Adrenal gland (tissue), 19 donors: ENCODE measurements at regions of chr2 and their contacts with region 1.

Region 1: GRCh38 chr2:158753641-158754611 is 41.2 kb upstream of the DAPL1 start:
- DNase-seq: peak; percentile 48 to 71 (median 58)
- H3K4me3 ChIP-seq: peak overlapping the region in 1 of 4 donors; percentile 40
- H3K27ac ChIP-seq: peak overlapping the region in 1 of 5 donors; percentile 2
- H3K4me1 ChIP-seq: peaks cover 0 to 6% of the 10 kb centered on the region in 2 donors
- H3K27me3 ChIP-seq: no peaks in the 10 kb centered on the region
- CTCF ChIP-seq: peak; percentile 76 to 92 (median 86)
- POLR2A ChIP-seq: no peak

Region 2: DNA sequence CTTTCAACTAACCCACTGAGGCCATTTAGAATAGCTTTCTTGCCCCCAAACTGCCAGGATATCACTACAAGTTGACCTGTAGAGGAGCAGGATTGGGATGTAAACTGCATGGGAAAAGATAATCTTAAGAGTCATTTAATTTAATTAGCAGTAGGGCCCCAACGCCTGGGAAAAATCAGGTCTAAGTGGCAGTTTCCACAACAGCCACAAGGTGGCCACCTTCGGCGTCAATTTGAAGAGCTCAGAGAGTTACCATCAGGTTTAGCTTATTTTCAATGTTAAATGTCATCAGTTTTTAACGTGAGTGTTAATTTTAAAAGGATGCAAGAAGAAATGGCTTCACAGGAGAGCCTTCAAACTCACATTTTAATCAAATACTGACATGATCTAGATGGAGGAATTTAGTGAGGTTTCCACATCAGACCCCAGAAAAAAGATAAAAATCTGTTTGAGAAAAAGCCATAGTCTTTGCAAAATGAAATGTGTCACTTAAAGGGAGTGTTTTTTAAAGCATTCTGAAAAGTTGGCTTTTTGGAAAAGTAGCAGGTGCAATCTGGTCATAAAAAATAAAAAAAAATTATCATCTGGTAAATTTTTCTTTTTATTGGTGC is 729.5 kb before region 1 on chr2:
- intact Hi-C with region 1: loop called (anchors 2 to 5 kb)
- DNase-seq: peak in 6 of 7 donors; percentile 24 to 80 (median 47)
- H3K4me3 ChIP-seq: no peak overlapping the region
- H3K27ac ChIP-seq: no peak overlapping the region
- H3K4me1 ChIP-seq: peaks cover 8 to 9% of the 10 kb centered on the region in 2 donors
- H3K27me3 ChIP-seq: no peaks in the 10 kb centered on the region
- CTCF ChIP-seq: peak; percentile 73 to 90 (median 84)
- POLR2A ChIP-seq: no peak

Region 3: GRCh38 chr2:158637357-158637756 is 116.6 kb before region 1 on chr2:
- intact Hi-C with region 1: no loop called
- DNase-seq: no peak
- H3K4me3 ChIP-seq: no peak overlapping the region
- H3K27ac ChIP-seq: no peak overlapping the region
- H3K4me1 ChIP-seq: peaks cover 0 to 21% of the 10 kb centered on the region in 2 donors
- H3K27me3 ChIP-seq: no peaks in the 10 kb centered on the region
- CTCF ChIP-seq: no peak
- POLR2A ChIP-seq: no peak